ENCODE measurements at regions of chr5 and their contacts with region 1.

Region 1: DNA sequence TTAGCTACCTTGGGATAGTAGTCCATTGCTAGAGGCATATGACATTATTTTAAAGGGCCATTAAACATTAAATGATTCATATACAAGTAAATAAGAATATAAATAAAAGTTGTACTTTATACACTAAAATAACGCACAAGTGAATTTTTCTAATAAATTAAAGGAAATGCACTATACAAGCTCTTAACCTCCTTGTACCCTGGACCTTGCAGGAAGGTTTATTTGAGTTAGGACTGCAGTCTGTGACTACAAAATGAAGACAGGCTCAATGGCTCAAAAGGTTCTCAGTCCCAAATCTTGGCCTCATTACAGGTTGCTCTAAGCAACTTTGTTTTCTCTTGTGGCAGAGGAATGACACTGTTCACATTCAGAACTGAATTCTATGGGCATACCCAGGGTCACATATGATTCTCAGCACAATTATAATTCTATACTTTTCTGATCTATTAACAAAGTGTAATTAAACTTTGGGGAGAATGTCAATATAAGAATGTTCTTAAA is 34.4 kb downstream of the FEM1C start:
- DNase-seq: no peak
- CTCF ChIP-seq: no peak

Region 2: GRCh38 chr5:115522832-115523403 is 12.7 kb after region 1 on chr5:
- CTCF ChIA-PET with region 1: interaction called, 11 read pairs
- POLR2A ChIA-PET with region 1: no interaction called
- DNase-seq: no peak
- CTCF ChIP-seq: no peak

Measured in GM10248 (cell line).